IMR-90 (cell line): ENCODE measurements at regions of chr3 and their contacts with region 1.

Region 1: GRCh38 chr3:150870396-150870795 is 34.8 kb downstream of the MINDY4B start:
- DNase-seq: peak; percentile 52
- ATAC-seq: peak; percentile 54
- H3K4me3 ChIP-seq: no peak overlapping the region
- H3K27ac ChIP-seq: no peak overlapping the region
- H3K4me1 ChIP-seq: no peaks in the 10 kb centered on the region; the same call in 1 of the 2 replicates
- H3K27me3 ChIP-seq: no peaks in the 10 kb centered on the region; the same call in 1 of the 2 replicates
- CTCF ChIP-seq: no peak
- POLR2A ChIP-seq: no peak
- RAD21 ChIP-seq: no peak

Region 2: GRCh38 chr3:150589759-150590158 is 280.6 kb before region 1 on chr3:
- CTCF ChIA-PET with region 1: no interaction called
- POLR2A ChIA-PET with region 1: no interaction called
- dilution Hi-C with region 1: no loop called
- in situ Hi-C with region 1: no loop called
- intact Hi-C with region 1: loop called (anchors 2 kb)
- DNase-seq: peak; percentile 32
- ATAC-seq: peak; percentile 50
- H3K4me3 ChIP-seq: no peak overlapping the region
- H3K27ac ChIP-seq: no peak overlapping the region
- H3K4me1 ChIP-seq: 0 out of 2 replicates have a peak, but pooled peaks cover 2% of the 10 kb centered on the region
- H3K27me3 ChIP-seq: no peaks in the 10 kb centered on the region
- CTCF ChIP-seq: no peak
- POLR2A ChIP-seq: no peak
- RAD21 ChIP-seq: no peak

Region 3: GRCh38 chr3:150787741-150788370 is 82.5 kb before region 1 on chr3:
- CTCF ChIA-PET with region 1: interaction called, 3 read pairs
- POLR2A ChIA-PET with region 1: no interaction called
- dilution Hi-C with region 1: no loop called
- in situ Hi-C with region 1: no loop called
- intact Hi-C with region 1: loop called (anchors 1 kb)
- DNase-seq: peak; percentile 64
- ATAC-seq: peak; percentile 93
- H3K4me3 ChIP-seq: no peak overlapping the region
- H3K27ac ChIP-seq: no peak overlapping the region
- H3K4me1 ChIP-seq: no peaks in the 10 kb centered on the region
- H3K27me3 ChIP-seq: peaks cover 23% of the 10 kb centered on the region
- CTCF ChIP-seq: peak; percentile 81
- POLR2A ChIP-seq: no peak
- RAD21 ChIP-seq: peak; percentile 73

Region 4: GRCh38 chr3:151593928-151594327 is 723.5 kb after region 1 on chr3:
- CTCF ChIA-PET with region 1: no interaction called
- POLR2A ChIA-PET with region 1: no interaction called
- dilution Hi-C with region 1: no loop called
- in situ Hi-C with region 1: no loop called
- intact Hi-C with region 1: no loop called
- DNase-seq: no peak
- ATAC-seq: no peak
- H3K4me3 ChIP-seq: no peak overlapping the region
- H3K27ac ChIP-seq: no peak overlapping the region
- H3K4me1 ChIP-seq: no peaks in the 10 kb centered on the region
- H3K27me3 ChIP-seq: no peaks in the 10 kb centered on the region
- CTCF ChIP-seq: no peak
- POLR2A ChIP-seq: no peak
- RAD21 ChIP-seq: no peak